ENCODE measurements at regions of chr16 and their contacts with region 1.

Region 1: DNA sequence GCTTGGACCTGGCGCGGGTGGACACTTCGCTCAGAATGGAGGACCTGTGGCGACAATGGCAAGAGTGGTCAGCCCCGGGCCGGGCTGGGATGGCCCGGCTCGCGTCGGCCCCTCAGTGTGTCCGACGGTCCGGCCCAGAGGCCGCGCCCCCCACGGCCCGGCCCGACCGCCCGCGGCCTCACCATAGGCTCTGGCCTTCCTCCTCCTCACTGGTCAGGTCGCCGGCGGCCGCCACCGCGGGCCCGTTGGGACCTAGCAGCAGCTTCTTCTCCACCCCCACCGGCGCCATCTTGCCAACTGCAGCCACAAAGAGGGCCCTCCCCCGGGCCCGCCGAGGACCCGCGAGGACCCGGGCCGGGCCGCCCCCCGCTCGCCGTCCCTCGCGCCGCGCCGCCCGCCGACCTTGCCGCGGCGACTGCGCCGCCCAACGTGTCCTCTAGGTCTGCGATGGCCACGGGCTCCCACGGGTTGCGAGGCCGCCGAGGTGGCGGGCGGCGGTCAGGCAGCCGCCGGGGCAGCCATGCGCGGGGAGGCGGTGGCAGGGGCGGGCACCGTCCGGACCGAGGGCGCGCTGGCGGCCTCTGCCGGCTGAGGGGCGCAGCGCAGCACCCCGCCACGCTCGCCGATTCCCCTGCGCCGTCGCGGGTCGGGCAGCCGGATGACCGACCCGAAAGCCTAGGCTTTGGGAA is at the start of gene DYNC1LI2:
- DNase-seq: peak; percentile 76
- H3K4me3 Mint-ChIP-seq: peak within 1 kb of the TSS; percentile 93
- H3K27ac Mint-ChIP-seq: peak within 1 kb of the TSS; percentile 80
- H3K4me1 Mint-ChIP-seq: peaks cover 46% of the 10 kb centered on the region
- H3K27me3 Mint-ChIP-seq: peaks cover 16% of the 10 kb centered on the region
- total RNA-seq, gene DYNC1LI2: 55.7 and 60.3 TPM in 2 replicates

Region 2: DNA sequence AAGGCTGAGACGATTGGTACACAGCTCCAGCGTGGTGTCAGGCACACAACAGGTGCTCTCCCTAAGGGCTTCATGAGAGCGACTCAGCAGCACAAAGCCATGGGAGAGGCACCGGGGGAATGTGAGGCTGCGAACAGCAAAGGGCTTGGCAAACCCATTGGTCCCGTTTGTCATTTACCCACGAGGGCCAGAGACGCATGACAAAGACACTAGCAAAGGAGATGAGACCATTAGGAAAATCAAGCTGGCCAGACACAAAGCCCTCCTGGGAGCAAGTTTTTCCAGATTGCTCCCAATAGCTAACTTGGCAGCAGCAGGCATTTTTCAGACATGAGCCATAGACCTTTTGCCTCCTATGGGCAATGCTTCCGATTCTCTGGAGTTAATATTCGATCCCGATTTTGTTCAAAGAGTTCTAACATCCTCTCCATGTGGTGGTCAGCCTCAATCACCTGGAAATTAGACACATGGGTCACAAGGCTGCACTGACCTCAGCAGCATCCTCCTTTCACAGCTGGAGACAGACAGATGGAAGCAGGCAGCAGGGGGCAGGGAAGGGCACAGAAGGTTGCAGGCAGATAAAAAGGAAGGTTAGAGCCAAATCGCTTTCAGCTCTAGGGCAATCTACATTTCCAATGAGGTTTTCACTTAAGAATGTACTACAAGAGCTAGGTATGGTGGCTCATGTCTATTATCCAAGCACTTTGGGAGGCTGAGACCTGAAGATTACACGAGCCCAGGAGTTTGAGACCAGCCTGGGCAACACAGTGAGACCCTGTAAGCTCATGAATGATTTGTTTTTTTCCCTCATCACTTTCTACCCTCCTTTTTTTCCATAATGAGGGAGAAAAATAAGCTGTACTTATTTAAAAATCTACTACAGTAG is 239.6 kb before region 1 on chr16:
- intact Hi-C with region 1: no loop called
- DNase-seq: no peak
- H3K4me3 Mint-ChIP-seq: no peak overlapping the region
- H3K27ac Mint-ChIP-seq: peak overlapping the region; percentile 40
- H3K4me1 Mint-ChIP-seq: peaks cover 39% of the 10 kb centered on the region
- H3K27me3 Mint-ChIP-seq: no peaks in the 10 kb centered on the region

Region 3: GRCh38 chr16:66521951-66522771 is 229.3 kb before region 1 on chr16:
- intact Hi-C with region 1: loop called (anchors 5 kb)
- DNase-seq: peak; percentile 88
- H3K4me3 Mint-ChIP-seq: peak overlapping the region; percentile 53
- H3K27ac Mint-ChIP-seq: peak overlapping the region; percentile 77
- H3K4me1 Mint-ChIP-seq: peaks cover 93% of the 10 kb centered on the region
- H3K27me3 Mint-ChIP-seq: peaks cover 2% of the 10 kb centered on the region

Region 4: GRCh38 chr16:66696669-66697630 is 54.5 kb before region 1 on chr16 and contains the start of gene CMTM4:
- intact Hi-C with region 1: loop called (anchors 5 kb)
- DNase-seq: peak; percentile 74
- H3K4me3 Mint-ChIP-seq: peak within 1 kb of the TSS; percentile 77
- H3K27ac Mint-ChIP-seq: no peak within 1 kb of the TSS
- H3K4me1 Mint-ChIP-seq: no peaks in the 10 kb centered on the region
- H3K27me3 Mint-ChIP-seq: peaks cover 38% of the 10 kb centered on the region
- total RNA-seq, gene CMTM4: 3.3 and 3.9 TPM in 2 replicates

Region 5: GRCh38 chr16:66728117-66728787 is 23.2 kb before region 1 on chr16:
- intact Hi-C with region 1: loop called (anchors 1 kb)
- DNase-seq: no peak
- H3K4me3 Mint-ChIP-seq: no peak overlapping the region
- H3K27ac Mint-ChIP-seq: no peak overlapping the region
- H3K4me1 Mint-ChIP-seq: peaks cover 16% of the 10 kb centered on the region
- H3K27me3 Mint-ChIP-seq: no peaks in the 10 kb centered on the region

Region 6: GRCh38 chr16:66830422-66831404 is 79.3 kb after region 1 on chr16 and contains the start of gene NAE1:
- intact Hi-C with region 1: loop called (anchors 1 kb)
- DNase-seq: peak; percentile 90
- H3K4me3 Mint-ChIP-seq: peak within 1 kb of the TSS; percentile 83
- H3K27ac Mint-ChIP-seq: peak within 1 kb of the TSS; percentile 72
- H3K4me1 Mint-ChIP-seq: peaks cover 20% of the 10 kb centered on the region
- H3K27me3 Mint-ChIP-seq: peaks cover 2% of the 10 kb centered on the region
- total RNA-seq, gene NAE1: 114 and 120 TPM in 2 replicates

Region 7: DNA sequence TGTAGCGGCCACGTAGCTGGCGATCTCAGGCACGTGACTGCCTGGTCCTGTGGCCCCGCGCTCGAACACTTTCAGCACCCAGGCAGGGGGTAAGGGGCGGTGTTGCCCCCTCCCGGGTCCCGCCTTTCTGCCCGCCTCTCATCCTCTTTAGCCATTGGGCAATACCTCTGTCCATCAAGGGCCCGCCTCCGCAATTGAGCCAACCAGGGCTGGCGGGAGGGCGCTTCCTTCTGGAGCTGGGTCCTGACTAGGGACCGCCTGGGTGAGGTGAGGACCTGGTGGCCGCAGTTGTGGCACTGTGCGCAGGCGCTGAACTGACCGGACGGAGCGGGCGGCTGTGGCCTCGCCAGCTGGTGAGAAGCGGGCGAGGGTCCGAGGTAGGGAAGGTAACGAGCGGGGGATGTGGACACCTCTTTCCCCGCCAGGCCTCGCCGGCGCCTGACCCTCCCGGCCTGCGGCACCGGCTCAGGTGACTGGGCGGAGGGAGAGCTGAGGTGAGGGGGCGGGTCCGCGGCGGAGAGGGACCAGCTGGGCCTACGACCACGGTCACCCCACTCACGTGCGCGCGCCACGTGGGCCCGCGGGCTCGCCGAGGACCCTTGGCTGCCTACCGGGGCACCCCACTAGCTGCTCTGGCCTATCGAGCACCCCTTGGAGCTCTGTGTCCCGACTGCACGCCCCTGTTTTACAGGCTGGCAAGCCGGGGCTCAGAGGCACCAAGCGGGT is 129.0 kb after region 1 on chr16 and contains the start of gene PDP2:
- intact Hi-C with region 1: loop called (anchors 2 kb)
- DNase-seq: peak; percentile 92
- H3K4me3 Mint-ChIP-seq: peak within 1 kb of the TSS; percentile 98
- H3K27ac Mint-ChIP-seq: peak within 1 kb of the TSS; percentile 95
- H3K4me1 Mint-ChIP-seq: peaks cover 51% of the 10 kb centered on the region
- H3K27me3 Mint-ChIP-seq: no peaks in the 10 kb centered on the region
- total RNA-seq, gene PDP2: 43.3 and 52.2 TPM in 2 replicates